Motor neuron (in vitro differentiated cells): ENCODE measurements at regions of chr5 and their contacts with region 1.

Region 1: GRCh38 chr5:164048359-164048926 is 543.0 kb downstream of the MAT2B start:
- ATAC-seq: peak in 5 of 8 experiments; percentile 46 to 89 (median 56)
- H3K4me3 ChIP-seq: no peak overlapping the region
- H3K27ac ChIP-seq: no peak overlapping the region
- H3K4me1 ChIP-seq: peaks cover 5 to 17% of the 10 kb centered on the region in 2 donors

Region 2: DNA sequence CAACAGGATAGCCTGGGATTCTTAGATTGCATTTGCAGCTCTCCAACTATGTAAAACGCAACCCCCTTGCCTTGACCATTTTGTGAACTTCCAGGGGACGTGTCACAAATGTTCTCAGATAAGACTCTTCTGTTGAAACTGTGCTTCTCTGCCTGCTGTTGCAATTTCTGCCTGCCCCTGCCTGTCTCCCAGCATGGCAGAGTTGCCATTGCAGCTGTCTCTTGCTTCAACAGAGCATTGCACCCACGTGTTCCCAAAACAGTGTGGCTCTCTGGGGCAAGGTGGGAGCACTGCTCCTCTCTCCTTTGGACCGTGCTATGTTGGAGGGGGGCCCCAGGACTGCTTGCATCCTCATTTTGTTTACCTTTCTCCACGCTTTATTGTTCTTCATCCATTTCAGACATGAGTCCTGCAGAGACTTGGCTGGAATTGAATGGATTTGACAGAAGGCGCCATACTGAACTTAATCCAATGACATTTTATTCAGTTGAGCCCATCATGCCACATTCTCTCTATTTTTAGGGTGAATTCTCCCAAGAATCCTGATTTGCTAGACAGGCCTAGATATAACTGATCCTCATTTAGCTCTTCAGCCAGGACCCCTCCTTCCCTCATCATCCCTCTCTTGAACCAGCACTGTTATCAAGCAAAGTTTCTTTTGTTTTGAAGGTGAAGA is 452.4 kb before region 1 on chr5:
- in situ Hi-C with region 1: no loop called
- ATAC-seq: no peak
- H3K4me3 ChIP-seq: no peak overlapping the region
- H3K27ac ChIP-seq: no peak overlapping the region
- H3K4me1 ChIP-seq: no peaks in the 10 kb centered on the region

Region 3: DNA sequence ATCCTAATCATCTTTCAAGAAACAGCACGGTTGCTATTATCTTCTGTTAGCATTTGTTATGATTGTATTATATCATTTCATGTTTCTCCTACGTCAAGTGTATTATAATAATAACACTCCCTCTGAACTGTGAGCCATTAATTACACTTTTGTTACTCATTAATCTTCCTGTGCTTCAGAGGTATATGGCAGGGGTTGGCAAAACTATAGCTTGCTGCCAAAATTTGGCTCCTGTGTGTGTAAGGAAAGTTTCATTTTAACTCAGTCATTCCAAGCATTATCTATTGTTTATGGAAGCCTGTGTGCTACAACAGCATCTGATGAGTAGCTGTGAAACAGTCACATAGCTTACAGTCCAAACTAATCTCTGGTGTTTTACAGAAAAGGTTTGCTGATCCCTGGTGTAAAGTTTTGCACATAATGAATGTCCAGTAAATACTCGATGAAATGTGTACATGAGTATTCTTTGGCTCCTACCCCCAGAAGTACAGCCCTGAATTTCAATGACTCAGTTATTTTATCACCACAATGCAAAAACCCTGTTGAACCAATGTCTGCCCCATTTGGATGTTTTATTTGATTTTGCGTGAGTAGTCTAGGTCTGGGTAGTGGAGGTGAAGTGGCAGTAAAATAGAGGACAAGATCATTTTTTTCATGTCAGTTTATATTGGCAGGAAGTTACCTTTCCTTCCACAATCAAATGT is 105.2 kb after region 1 on chr5:
- in situ Hi-C with region 1: no loop called
- ATAC-seq: no peak
- H3K4me3 ChIP-seq: no peak overlapping the region
- H3K27ac ChIP-seq: no peak overlapping the region
- H3K4me1 ChIP-seq: peaks cover 0 to 4% of the 10 kb centered on the region in 2 donors

Region 4: GRCh38 chr5:164358531-164359259 is 310.3 kb after region 1 on chr5:
- in situ Hi-C with region 1: no loop called
- ATAC-seq: no peak
- H3K4me3 ChIP-seq: no peak overlapping the region
- H3K27ac ChIP-seq: no peak overlapping the region
- H3K4me1 ChIP-seq: peaks cover 0 to 35% of the 10 kb centered on the region in 2 donors

Region 5: DNA sequence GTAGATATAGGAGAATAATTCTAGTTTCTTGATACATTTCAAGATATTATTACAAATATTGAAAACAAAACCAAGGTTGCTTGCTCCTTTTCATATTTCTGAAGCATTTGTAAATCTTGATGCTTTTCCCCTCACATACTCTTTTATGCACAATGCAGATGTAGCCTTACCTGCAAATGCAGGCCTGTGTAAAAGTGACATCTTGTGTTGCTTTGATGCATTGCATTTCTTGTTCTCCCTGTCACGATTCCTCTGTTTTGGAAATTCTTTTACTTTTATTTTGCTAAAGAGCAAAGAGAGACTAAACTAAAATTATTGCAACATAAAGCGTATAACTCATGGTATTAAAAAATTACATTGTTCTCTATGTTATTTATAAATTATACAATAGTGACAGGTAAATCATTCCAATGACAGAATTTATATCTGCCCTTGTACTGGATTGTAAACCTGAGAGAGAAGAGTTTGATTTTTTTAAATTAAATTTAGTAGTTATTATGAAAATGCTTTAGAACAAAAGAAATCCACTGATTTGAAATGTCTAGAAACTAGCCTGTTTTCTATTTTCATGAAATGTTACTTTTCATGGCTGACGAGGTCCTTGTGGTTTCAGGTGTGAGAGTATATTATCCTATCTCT is 427.0 kb after region 1 on chr5:
- in situ Hi-C with region 1: loop called in 1 of 9 experiments (anchors 25 kb)
- ATAC-seq: peak in 1 of 8 experiments; percentile 26
- H3K4me3 ChIP-seq: no peak overlapping the region
- H3K27ac ChIP-seq: no peak overlapping the region
- H3K4me1 ChIP-seq: peaks cover 0 to 5% of the 10 kb centered on the region in 2 donors

Region 6: DNA sequence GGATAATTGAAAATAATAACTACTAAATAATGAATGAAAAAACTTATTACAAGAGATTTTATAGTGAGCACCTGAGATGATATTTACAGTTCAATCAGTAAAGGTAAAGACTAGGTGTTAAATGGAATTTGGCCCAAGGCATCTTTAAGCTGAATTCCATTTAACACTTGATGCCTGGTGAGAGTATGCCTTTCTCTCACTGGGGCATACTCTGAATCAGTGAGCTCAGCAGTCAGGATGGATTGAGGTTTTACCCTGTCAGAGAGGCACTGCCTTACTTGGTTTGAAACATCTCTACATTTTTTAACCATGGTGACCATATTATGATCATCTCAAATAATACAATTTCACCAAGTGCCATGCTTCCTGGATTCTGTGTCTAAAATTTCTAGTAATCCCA is 873.3 kb after region 1 on chr5:
- in situ Hi-C with region 1: no loop called
- ATAC-seq: no peak
- H3K4me3 ChIP-seq: no peak overlapping the region
- H3K27ac ChIP-seq: no peak overlapping the region
- H3K4me1 ChIP-seq: no peaks in the 10 kb centered on the region

Region 7: GRCh38 chr5:165209086-165209727 is 1160.8 kb after region 1 on chr5:
- in situ Hi-C with region 1: loop called in 1 of 9 experiments (anchors 25 kb)
- ATAC-seq: no peak
- H3K4me3 ChIP-seq: no peak overlapping the region
- H3K27ac ChIP-seq: no peak overlapping the region
- H3K4me1 ChIP-seq: peaks cover 3 to 4% of the 10 kb centered on the region in 2 donors